A549 (cell line): ENCODE measurements at regions of chr17 and their contacts with region 1.

Region 1: DNA sequence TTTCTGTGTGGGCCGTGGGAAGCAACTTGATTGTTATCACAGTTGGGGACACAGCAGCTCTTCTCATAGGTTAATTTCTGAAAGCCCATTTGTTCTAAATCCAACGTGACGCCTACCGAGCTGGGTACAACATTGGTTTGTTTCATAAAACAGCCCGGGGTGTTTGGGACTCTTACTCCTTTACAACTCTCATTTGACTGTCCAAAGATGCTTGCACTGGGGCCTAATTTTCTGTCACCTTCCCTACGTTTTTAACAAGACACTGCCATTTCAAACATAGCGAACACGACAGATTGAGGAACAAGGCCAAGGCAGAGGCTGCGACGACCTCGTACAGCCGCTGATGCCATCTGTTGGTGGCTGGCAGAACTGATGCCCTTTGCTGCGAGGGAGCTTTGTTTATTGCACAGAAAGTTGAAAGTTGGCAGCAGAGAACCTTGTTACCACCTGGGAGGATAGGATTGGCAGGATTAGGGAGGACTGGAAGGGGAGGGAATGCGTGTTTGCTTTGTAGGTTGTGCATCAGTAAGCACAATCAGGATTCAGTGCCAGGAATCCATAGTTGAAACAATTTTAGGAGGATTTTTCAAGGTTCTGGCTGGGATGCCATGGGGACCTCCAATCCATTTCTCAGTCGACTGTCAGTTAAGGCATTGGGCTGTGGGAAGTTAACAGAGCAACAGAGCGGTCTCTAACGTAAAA is 98.3 kb downstream of the PITPNC1 start:
- DNase-seq: peak; percentile 82 to 85
- ATAC-seq: peak; percentile 93 to 96
- H3K4me3 ChIP-seq: no peak overlapping the region
- H3K27ac ChIP-seq: no peak overlapping the region
- H3K4me1 ChIP-seq: no peaks in the 10 kb centered on the region
- CTCF ChIP-seq: peak; percentile 92
- EP300 ChIP-seq: no peak
- POLR2A ChIP-seq: no peak
- RAD21 ChIP-seq: peak; percentile 93 to 95

Region 2: DNA sequence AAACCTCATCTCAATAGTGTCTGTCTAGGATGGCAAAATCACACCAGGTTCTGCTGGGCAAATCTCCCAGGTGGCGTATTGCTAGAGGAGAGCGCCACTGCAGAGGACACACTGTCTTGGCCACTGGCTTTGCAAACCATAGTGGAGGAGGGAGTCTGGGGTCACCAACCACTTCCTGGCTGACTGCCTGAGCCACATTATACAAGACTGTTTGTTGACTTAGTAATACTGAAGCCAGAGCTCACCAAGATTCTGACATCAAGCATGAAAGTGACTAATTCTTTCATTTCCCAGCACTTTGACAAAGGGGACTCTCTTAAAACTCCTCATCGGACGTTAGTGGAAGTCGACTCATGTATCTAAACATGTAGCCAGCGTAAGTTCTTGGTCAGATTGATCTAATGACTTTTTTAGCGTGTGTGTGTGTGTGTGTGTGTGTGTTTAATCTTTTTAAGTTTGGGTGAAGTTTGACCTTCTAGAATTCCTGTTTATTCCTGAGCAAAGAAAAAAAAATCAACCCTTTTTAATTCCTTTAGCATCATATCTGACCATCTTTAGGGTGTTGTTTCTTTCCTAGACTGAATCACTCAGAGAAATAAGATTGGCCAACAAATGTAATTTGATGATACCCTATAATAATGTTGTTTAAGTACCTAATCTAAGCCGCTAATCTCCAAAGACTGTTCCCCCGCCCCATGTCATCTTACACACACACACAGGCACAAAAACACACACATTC is 84.6 kb before region 1 on chr17:
- CTCF ChIA-PET with region 1: interaction called, 185 read pairs
- POLR2A ChIA-PET with region 1: no interaction called
- DNase-seq: peak; percentile 42 to 83
- ATAC-seq: peak; percentile 80
- H3K4me3 ChIP-seq: no peak overlapping the region
- H3K27ac ChIP-seq: peak overlapping the region; percentile 54 to 68; a peak in 5 of 6 replicates
- H3K4me1 ChIP-seq: peaks cover 19% of the 10 kb centered on the region
- CTCF ChIP-seq: no peak
- EP300 ChIP-seq: peak in 1 of 2 experiments; percentile 54; a peak in 1 of 5 replicates
- POLR2A ChIP-seq: no peak
- RAD21 ChIP-seq: no peak; a peak in 1 of 5 replicates

Region 3: DNA sequence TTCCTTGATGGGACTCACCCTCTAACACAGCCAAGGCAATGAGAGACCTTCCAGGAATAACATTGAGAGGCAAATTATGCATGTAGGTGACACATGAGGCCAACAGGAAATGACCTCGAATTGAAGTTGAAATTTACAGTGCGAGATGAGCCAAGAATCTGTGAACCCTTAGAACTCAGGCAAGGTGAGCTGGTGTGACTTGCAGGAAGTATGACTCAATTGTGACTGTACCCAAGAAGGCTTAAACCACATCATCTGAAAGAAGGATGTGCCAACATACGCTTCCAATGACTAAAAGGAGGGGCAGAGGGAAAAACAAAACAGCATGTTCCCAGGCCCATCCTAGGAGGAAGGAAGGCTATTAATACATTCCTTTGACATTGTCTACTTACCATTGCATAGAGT is 53.5 kb before region 1 on chr17:
- CTCF ChIA-PET with region 1: interaction called, 13 read pairs
- POLR2A ChIA-PET with region 1: no interaction called
- DNase-seq: peak; percentile 95
- ATAC-seq: peak; percentile 86 to 99
- H3K4me3 ChIP-seq: no peak overlapping the region
- H3K27ac ChIP-seq: peak overlapping the region; percentile 68 to 77
- H3K4me1 ChIP-seq: peaks cover 27% of the 10 kb centered on the region
- CTCF ChIP-seq: no peak
- EP300 ChIP-seq: peak; percentile 34 to 58; a peak in 3 of 5 replicates
- POLR2A ChIP-seq: no peak
- RAD21 ChIP-seq: no peak

Region 4: GRCh38 chr17:67441052-67441927 is 34.1 kb before region 1 on chr17:
- CTCF ChIA-PET with region 1: interaction called, 27 read pairs
- POLR2A ChIA-PET with region 1: no interaction called
- DNase-seq: peak; percentile 81 to 85
- ATAC-seq: peak; percentile 94 to 96
- H3K4me3 ChIP-seq: peak overlapping the region; percentile 8
- H3K27ac ChIP-seq: peak overlapping the region; percentile 56 to 71
- H3K4me1 ChIP-seq: peaks cover 21% of the 10 kb centered on the region
- CTCF ChIP-seq: no peak
- EP300 ChIP-seq: no peak
- POLR2A ChIP-seq: no peak
- RAD21 ChIP-seq: no peak

Region 5: DNA sequence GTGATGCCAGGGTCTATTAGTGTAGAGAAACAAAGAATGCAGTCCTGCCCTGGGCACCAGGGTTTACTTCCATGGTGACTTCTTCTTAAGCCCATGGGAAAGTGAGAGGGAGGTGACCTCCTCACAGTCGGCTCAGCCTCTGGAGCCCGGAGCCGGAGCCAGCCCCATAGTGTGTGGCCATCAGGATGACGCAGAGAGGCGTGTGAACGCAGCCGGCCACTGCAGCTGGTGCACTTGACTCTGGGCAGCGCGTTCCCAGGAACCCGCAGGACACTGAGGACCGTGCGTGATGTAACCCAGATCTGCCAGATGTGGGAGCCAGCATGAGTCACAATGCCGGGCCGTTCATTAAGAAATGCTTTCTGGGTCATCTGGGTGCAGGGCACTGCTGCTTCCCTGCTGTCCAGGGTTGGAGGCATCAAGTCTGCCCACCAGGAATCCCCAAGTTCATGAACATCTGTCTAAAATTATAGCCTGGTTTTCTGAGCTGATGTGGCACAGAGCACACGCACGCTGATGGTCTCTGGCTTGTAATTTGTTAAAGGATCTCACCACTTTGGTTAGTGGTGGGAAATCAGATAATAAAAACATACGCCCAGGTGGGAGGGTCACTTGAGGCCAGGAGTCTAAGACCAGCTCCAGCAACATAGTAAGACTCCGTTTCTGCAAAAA is 15.8 kb after region 1 on chr17:
- CTCF ChIA-PET with region 1: interaction called, 57 read pairs
- POLR2A ChIA-PET with region 1: no interaction called
- DNase-seq: peak; percentile 80 to 91
- ATAC-seq: peak; percentile 97 to 98
- H3K4me3 ChIP-seq: peak overlapping the region; percentile 29
- H3K27ac ChIP-seq: peak overlapping the region; percentile 61 to 67
- H3K4me1 ChIP-seq: peaks cover 26% of the 10 kb centered on the region
- CTCF ChIP-seq: no peak
- EP300 ChIP-seq: peak; percentile 36 to 57; a peak in 3 of 5 replicates
- POLR2A ChIP-seq: no peak
- RAD21 ChIP-seq: 0 out of 5 replicates have a peak, but pooled peaks of 1 of the 2 experiments have one; percentile 34

Region 6: DNA sequence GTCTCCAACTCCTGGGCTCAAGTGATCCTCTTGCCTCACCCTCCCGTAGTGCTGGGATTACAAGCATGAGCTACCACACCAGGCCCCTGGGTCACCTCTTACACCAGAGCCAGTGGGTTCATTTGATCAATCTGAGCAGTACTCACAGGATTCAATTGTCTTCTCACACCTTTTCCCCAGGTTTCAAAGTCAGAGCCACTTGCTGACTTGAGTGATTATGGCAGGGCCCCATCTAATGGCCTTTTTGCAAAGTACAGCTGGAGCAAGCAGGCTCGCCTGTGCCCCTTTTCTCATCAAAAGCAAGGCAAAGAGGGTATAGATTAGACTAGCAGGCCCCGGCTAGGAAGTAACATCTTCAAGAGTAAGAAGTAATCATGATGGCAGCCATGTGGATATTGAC is 127.6 kb after region 1 on chr17:
- CTCF ChIA-PET with region 1: interaction called, 13 read pairs
- POLR2A ChIA-PET with region 1: no interaction called
- DNase-seq: peak; percentile 58 to 61
- ATAC-seq: peak; percentile 69 to 78; a peak in 5 of 6 replicates
- H3K4me3 ChIP-seq: no peak overlapping the region
- H3K27ac ChIP-seq: no peak overlapping the region
- H3K4me1 ChIP-seq: no peaks in the 10 kb centered on the region
- CTCF ChIP-seq: peak; percentile 38; the same call in 2 of the 3 replicates
- EP300 ChIP-seq: no peak
- POLR2A ChIP-seq: no peak
- RAD21 ChIP-seq: peak; percentile 58 to 72